Endothelial cell of umbilical vein (primary cell): ENCODE measurements at regions of chr22 and their contacts with region 1.

Region 1: GRCh38 chr22:24460418-24461089 is 33.2 kb downstream of the ADORA2A start:
- DNase-seq: peak; percentile 51
- H3K4me3 ChIP-seq: no peak overlapping the region
- H3K27ac ChIP-seq: peak overlapping the region; percentile 33
- H3K4me1 ChIP-seq: peaks cover 41% of the 10 kb centered on the region
- H3K27me3 ChIP-seq: no peaks in the 10 kb centered on the region
- CTCF ChIP-seq: peak in 1 of 2 donors; percentile 19
- POLR2A ChIP-seq: no peak

Region 2: GRCh38 chr22:24305260-24305692 is 155.3 kb before region 1 on chr22:
- CTCF ChIA-PET with region 1: no interaction called
- POLR2A ChIA-PET with region 1: no interaction called
- dilution Hi-C with region 1: no loop called
- intact Hi-C with region 1: no loop called
- DNase-seq: peak; percentile 89
- H3K4me3 ChIP-seq: peak overlapping the region in 1 of 3 experiments; percentile 28
- H3K27ac ChIP-seq: peak overlapping the region; percentile 89
- H3K4me1 ChIP-seq: peaks cover 39% of the 10 kb centered on the region
- H3K27me3 ChIP-seq: no peaks in the 10 kb centered on the region
- CTCF ChIP-seq: no peak
- POLR2A ChIP-seq: peak; percentile 44

Region 3: GRCh38 chr22:24391836-24392217 is 68.7 kb before region 1 on chr22:
- CTCF ChIA-PET with region 1: no interaction called
- POLR2A ChIA-PET with region 1: no interaction called
- dilution Hi-C with region 1: no loop called
- intact Hi-C with region 1: no loop called
- DNase-seq: peak; percentile 60
- H3K4me3 ChIP-seq: no peak overlapping the region
- H3K27ac ChIP-seq: peak overlapping the region; percentile 14
- H3K4me1 ChIP-seq: peaks cover 39% of the 10 kb centered on the region
- H3K27me3 ChIP-seq: no peaks in the 10 kb centered on the region
- CTCF ChIP-seq: no peak
- POLR2A ChIP-seq: no peak

Region 4: GRCh38 chr22:24510637-24511625 is 50.4 kb after region 1 on chr22:
- CTCF ChIA-PET with region 1: no interaction called
- POLR2A ChIA-PET with region 1: no interaction called
- dilution Hi-C with region 1: loop called (anchors 5 kb)
- intact Hi-C with region 1: no loop called
- DNase-seq: no peak
- H3K4me3 ChIP-seq: no peak overlapping the region
- H3K27ac ChIP-seq: no peak overlapping the region
- H3K4me1 ChIP-seq: peaks cover 16% of the 10 kb centered on the region
- H3K27me3 ChIP-seq: peaks cover 5 to 6% of the 10 kb centered on the region in 2 experiments
- CTCF ChIP-seq: no peak
- POLR2A ChIP-seq: no peak